Panc1 (cell line): ENCODE measurements at regions of chr5 and their contacts with region 1.

Region 1: DNA sequence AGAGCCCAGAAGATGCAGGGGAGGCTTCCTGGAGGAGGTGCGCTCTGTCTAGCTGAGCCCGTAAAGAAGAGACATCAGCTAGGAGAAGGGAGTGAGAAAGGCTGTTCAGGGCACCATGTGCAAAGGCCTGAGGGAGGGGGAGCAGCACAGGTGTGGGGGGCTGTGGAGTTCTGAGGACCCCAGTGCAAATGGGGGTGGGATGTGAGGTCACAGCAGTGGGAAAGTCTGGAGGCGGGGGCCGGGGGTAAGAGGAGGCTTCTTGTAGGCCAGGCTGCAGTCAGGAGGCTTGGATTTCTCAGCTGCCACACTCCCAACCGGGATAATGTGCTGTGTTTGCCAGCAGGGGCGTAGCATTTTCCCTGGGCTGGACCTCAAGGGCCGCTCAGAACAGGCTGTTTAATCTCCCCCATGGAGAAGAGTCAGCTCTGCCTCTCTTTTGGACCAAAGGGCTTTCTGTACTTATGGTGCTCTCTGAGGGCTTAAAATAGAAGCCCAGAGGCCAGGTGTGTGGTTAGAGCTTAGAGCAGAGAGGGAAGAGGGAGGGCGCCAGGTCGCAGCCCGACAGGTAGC is 5.7 kb downstream of the NEURL1B start:
- DNase-seq: no peak
- ATAC-seq: peak; percentile 82
- H3K4me3 ChIP-seq: no peak overlapping the region
- H3K27ac ChIP-seq: no peak overlapping the region
- H3K4me1 ChIP-seq: peaks cover 7% of the 10 kb centered on the region; the same call in 1 of the 2 replicates
- H3K27me3 ChIP-seq: peaks cover 4% of the 10 kb centered on the region; the same call in 1 of the 2 replicates
- CTCF ChIP-seq: peak; percentile 65

Region 2: DNA sequence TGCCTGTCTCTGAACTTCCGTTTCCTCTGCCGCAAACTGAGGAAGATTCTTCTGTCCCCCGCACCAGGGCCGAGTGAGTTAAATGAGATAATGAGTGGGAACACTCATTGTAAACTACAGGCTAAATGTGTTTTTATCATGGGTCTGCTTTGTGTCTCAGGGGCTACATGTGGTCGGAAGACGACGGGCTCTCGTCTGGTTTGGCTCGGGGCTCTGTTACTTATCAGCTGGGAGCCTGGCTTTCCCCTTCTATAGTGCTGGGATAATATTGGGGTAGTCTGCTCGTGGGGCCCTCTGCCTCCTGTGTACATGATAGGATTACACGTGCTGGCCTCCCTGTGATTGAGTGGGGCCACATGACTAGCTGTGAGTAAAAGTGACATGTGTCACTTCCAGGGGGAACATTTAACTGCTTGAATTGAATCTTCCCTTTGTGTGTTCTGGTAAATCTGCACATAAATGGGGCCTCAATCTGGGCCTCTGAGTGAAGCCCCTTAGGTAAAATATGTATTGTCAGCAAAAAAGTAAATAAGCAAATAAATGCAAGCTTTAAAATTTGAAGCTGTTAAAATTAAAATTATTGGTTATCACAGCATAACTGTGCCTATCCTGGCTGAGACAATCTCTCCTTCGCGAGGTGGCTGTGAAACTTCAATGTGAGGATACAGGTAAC is 105.6 kb before region 1 on chr5:
- CTCF ChIA-PET with region 1: no interaction called
- POLR2A ChIA-PET with region 1: interaction called, 10 read pairs
- in situ Hi-C with region 1: no loop called
- intact Hi-C with region 1: no loop called
- DNase-seq: no peak
- ATAC-seq: no peak
- H3K4me3 ChIP-seq: no peak overlapping the region
- H3K27ac ChIP-seq: no peak overlapping the region
- H3K4me1 ChIP-seq: no peaks in the 10 kb centered on the region
- H3K27me3 ChIP-seq: no peaks in the 10 kb centered on the region
- CTCF ChIP-seq: no peak

Region 3: DNA sequence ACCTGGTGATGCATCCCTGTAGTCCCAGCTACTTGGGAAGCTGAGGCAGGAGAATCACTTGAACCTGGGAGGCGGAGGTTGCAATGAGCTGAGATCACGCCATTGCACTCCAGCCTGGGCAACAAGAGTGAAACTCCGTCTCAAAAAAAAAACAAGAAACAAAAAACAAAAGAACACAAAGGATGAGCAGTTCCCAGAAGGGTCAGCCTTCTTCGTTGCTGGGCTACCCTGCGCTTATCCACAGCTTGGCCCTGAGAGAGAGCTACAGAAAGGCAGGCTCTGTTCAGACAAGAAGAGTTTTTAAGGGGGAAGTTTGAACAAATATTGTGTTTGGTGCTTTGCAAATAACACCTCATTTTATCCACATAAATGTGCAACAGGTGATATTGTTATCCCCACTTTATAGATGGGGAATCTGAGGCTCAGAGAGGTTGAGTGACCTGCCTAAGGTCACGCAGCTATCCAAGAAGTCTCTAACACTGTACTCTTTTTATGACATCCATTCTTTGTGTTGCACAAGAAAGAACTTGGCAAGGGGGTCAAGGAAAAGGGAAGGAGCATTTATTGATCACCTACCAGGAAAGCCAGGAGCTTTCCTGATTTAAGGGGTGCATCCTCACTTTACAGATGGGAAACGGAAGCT is 69.4 kb before region 1 on chr5:
- CTCF ChIA-PET with region 1: interaction called, 11 read pairs
- POLR2A ChIA-PET with region 1: no interaction called
- in situ Hi-C with region 1: no loop called
- intact Hi-C with region 1: no loop called
- DNase-seq: no peak
- ATAC-seq: no peak
- H3K4me3 ChIP-seq: no peak overlapping the region
- H3K27ac ChIP-seq: no peak overlapping the region
- H3K4me1 ChIP-seq: no peaks in the 10 kb centered on the region
- H3K27me3 ChIP-seq: no peaks in the 10 kb centered on the region
- CTCF ChIP-seq: no peak

Region 4: GRCh38 chr5:172958331-172959046 is 311.7 kb after region 1 on chr5:
- CTCF ChIA-PET with region 1: no interaction called
- POLR2A ChIA-PET with region 1: no interaction called
- in situ Hi-C with region 1: no loop called
- intact Hi-C with region 1: no loop called
- DNase-seq: no peak
- ATAC-seq: peak; percentile 86
- H3K4me3 ChIP-seq: peak overlapping the region; percentile 82 to 85
- H3K27ac ChIP-seq: peak overlapping the region; percentile 82
- H3K4me1 ChIP-seq: peaks cover 18% of the 10 kb centered on the region
- H3K27me3 ChIP-seq: no peaks in the 10 kb centered on the region
- CTCF ChIP-seq: no peak